PC-3 (cell line): ENCODE measurements at regions of chr18 and their contacts with region 1.

Region 1: GRCh38 chr18:34976899-34977837 is 64.0 kb upstream of the MAPRE2 start:
- DNase-seq: no peak
- ATAC-seq: peak; percentile 21
- H3K4me3 ChIP-seq: peak overlapping the region; percentile 70
- H3K27ac ChIP-seq: no peak overlapping the region
- H3K4me1 ChIP-seq: 0 out of 2 replicates have a peak, but pooled peaks cover 9% of the 10 kb centered on the region
- H3K27me3 ChIP-seq: no peaks in the 10 kb centered on the region
- CTCF ChIP-seq: no peak

Region 2: GRCh38 chr18:34821749-34822148 is 155.4 kb before region 1 on chr18:
- CTCF ChIA-PET with region 1: no interaction called
- POLR2A ChIA-PET with region 1: no interaction called
- intact Hi-C with region 1: no loop called
- DNase-seq: no peak
- ATAC-seq: peak; percentile 27; the same call in 1 of the 2 replicates
- H3K4me3 ChIP-seq: no peak overlapping the region
- H3K27ac ChIP-seq: no peak overlapping the region
- H3K4me1 ChIP-seq: no peaks in the 10 kb centered on the region
- H3K27me3 ChIP-seq: no peaks in the 10 kb centered on the region
- CTCF ChIP-seq: no peak

Region 3: DNA sequence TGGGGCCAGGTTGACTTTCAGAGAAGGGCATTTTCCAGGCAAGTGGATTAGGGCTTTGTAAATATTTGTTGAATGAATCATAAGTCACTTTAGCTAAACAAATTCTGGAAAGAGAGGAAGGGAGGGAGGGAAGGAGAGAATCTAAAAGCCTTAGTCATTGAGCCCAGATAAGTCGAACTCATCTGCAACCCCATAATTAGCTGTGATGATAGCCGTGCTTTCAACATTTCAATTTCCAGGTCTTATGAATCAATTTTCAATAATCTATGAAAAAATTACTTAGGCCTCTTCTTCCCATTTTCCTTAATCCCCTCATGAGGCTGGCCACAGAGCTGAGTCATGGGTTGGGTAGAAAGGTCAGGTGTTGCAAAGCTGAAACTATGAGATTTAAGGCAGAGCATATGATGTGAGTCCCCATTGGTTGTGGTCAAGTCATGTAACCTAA is 47.8 kb before region 1 on chr18:
- CTCF ChIA-PET with region 1: no interaction called
- POLR2A ChIA-PET with region 1: no interaction called
- intact Hi-C with region 1: loop called (anchors 2 kb)
- DNase-seq: peak; percentile 59
- ATAC-seq: peak; percentile 92
- H3K4me3 ChIP-seq: no peak overlapping the region
- H3K27ac ChIP-seq: peak overlapping the region; percentile 66
- H3K4me1 ChIP-seq: peaks cover 21% of the 10 kb centered on the region
- H3K27me3 ChIP-seq: no peaks in the 10 kb centered on the region
- CTCF ChIP-seq: no peak